ENCODE measurements at regions of chr11 and their contacts with region 1.

Region 1: DNA sequence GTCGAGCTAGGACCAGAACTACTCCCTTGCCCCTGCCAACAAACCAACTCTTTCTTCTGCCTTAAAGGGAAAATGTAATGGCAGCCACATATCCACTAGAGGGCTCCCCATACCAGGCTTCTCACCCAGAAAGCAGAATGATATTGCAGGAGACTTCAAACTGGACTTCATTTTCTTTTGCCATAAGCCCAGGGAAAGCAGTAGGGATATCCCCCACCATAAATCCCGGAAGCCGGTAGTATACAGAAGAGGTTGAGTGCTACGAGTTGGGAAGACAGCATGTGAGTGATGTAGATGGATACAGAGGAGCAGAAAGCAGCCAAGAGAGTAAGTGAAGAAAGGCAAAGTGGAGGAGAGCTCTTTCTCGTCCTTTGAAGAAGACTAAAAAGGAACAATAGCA is 12.1 kb downstream of the PLAAT5 start:
- DNase-seq: peak; percentile 64
- H3K4me3 ChIP-seq: no peak overlapping the region
- H3K27ac ChIP-seq: no peak overlapping the region
- H3K4me1 ChIP-seq: no peaks in the 10 kb centered on the region
- H3K27me3 ChIP-seq: no peaks in the 10 kb centered on the region
- CTCF ChIP-seq: peak; percentile 93

Region 2: GRCh38 chr11:63635762-63636465 is 157.0 kb after region 1 on chr11:
- intact Hi-C with region 1: loop called (anchors 2 kb)
- DNase-seq: peak; percentile 66
- H3K4me3 ChIP-seq: no peak overlapping the region
- H3K27ac ChIP-seq: no peak overlapping the region
- H3K4me1 ChIP-seq: peaks cover 2% of the 10 kb centered on the region
- H3K27me3 ChIP-seq: no peaks in the 10 kb centered on the region
- CTCF ChIP-seq: peak; percentile 89